Transverse colon (tissue), 4 donors: ENCODE measurements at regions of chr5 and their contacts with region 1.

Region 1: DNA sequence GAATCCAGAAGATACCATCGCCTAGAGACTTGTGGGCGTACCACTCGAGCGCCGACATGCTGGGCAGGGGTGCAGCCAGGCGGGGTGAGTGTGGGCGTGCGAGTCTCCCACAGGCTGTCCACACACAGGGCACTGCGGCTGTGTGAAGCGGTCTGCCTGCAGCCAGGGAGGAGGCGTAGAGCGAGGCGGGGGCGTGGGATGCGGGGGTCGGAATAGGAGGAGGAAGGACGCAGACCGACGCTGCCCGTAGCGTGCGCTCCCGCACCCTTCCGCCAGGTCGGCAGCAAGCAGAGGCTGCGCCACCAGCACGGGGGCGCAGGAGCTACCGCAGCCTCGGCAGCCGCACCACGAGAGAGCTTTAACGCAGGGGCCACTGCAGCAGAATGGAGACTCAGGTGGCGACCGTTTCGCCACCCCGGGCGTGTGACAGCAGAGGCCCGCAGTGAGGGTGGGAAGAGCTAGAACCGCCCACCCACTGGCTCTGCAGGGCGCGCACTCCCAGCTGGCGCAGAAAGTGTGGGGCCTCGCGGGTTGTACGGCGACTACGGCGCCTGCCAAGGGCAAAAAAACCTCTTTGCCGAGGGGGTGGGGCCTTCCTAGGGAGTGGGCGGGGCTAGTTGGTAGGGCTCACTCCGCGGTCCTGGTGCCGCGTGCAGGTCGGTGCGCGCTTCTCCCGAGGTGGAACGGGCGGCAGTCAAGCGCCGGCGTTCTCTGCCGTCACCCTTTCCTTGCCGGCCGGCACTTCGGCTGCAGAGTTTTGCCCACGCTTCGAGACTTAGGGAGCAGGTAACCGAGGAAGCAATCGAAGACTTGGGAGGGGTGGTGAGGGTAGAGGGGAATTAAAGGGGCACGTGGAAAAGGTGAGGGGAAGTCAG is at the starts of genes MBLAC2 and POLR3G:
- DNase-seq: peak; percentile 96
- H3K4me3 ChIP-seq: peak within 1 kb of the TSS; percentile 75 to 78 (median 76)
- H3K27ac ChIP-seq: peak within 1 kb of the TSS; percentile 84 to 93 (median 92)
- H3K4me1 ChIP-seq: peaks cover 5 to 28% (median 18%) of the 10 kb centered on the region in 4 donors
- H3K27me3 ChIP-seq: no peaks in the 10 kb centered on the region
- CTCF ChIP-seq: peak; percentile 46 to 86 (median 61)
- EP300 ChIP-seq: no peak
- POLR2A ChIP-seq: peak; percentile 87
- total RNA-seq, gene MBLAC2: 0.60 to 6.1 (median 6.0) TPM
- total RNA-seq, gene POLR3G: 1.1 to 6.7 (median 2.5) TPM in 3 of 4 donors, not detected in the other

Region 2: DNA sequence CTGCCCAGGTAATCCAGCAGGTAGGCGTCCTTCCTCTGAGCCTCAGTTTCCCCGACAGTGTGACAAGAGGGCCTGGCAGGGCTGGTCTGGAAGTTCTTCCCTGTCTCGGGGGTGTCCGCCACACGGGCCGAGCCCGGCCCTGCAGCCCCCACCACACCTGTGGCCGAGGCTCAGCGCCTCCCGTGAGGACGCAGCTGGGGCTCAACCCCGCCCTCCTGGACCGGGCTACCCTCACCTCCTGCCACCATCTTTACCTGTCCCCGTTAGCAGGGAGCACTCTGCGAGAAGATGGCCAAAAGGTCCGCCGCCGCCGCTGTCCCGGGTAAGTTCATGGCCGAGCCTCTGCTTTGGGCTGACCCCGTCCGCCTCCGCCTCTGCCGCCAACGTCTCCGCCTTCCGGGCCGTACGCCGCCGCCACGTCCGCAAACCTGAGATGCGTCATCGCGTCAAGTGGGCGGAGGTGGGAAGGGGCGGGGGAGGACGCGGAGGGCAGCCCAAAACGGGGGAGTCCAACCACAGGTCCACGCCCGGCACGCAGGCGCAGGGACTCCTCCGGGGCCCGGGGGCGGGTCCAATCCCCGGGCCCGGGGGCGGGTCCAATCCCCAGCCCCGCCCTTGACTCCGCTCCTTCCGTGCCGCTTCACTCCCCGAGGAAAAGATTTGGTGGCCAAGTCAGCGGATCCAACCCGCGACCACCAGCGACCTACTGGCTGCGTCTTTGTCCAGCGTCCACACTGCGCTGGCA is 54.9 kb after region 1 on chr5 and contains the start of gene LYSMD3:
- in situ Hi-C with region 1: loop called in 1 of 4 experiments (anchors 10 kb)
- intact Hi-C with region 1: no loop called
- DNase-seq: peak; percentile 99
- H3K4me3 ChIP-seq: peak within 1 kb of the TSS; percentile 80 to 89 (median 86)
- H3K27ac ChIP-seq: peak within 1 kb of the TSS; percentile 90 to 96 (median 92)
- H3K4me1 ChIP-seq: peaks cover 0 to 41% (median 32%) of the 10 kb centered on the region in 4 donors
- H3K27me3 ChIP-seq: no peaks in the 10 kb centered on the region
- CTCF ChIP-seq: no peak
- EP300 ChIP-seq: no peak
- POLR2A ChIP-seq: peak; percentile 95
- total RNA-seq, gene LYSMD3: 5.6 to 23.0 (median 12.8) TPM

Region 3: GRCh38 chr5:90558344-90559192 is 84.1 kb after region 1 on chr5 and contains the start of gene ADGRV1:
- in situ Hi-C with region 1: no loop called
- intact Hi-C with region 1: no loop called
- DNase-seq: peak; percentile 89
- H3K4me3 ChIP-seq: peak within 1 kb of the TSS; percentile 20 to 67 (median 44)
- H3K27ac ChIP-seq: peak within 1 kb of the TSS; percentile 27 to 53 (median 43)
- H3K4me1 ChIP-seq: peaks cover 0 to 20% (median 11%) of the 10 kb centered on the region in 4 donors
- H3K27me3 ChIP-seq: peaks cover 58% of the 10 kb centered on the region
- CTCF ChIP-seq: no peak
- EP300 ChIP-seq: no peak
- POLR2A ChIP-seq: peak; percentile 62
- total RNA-seq, gene ADGRV1: 6.0 to 37.0 (median 10.6) TPM

Region 4: GRCh38 chr5:90783460-90784333 is 309.2 kb after region 1 on chr5:
- in situ Hi-C with region 1: loop called in 1 of 4 experiments (anchors 25 kb)
- intact Hi-C with region 1: no loop called
- DNase-seq: peak; percentile 73
- H3K4me3 ChIP-seq: no peak overlapping the region
- H3K27ac ChIP-seq: no peak overlapping the region
- H3K4me1 ChIP-seq: no peaks in the 10 kb centered on the region
- H3K27me3 ChIP-seq: no peaks in the 10 kb centered on the region
- CTCF ChIP-seq: peak; percentile 61 to 85 (median 82)
- EP300 ChIP-seq: no peak
- POLR2A ChIP-seq: no peak